Endothelial cell of umbilical vein (primary cell): ENCODE measurements at regions of chr7 and their contacts with region 1.

Region 1: DNA sequence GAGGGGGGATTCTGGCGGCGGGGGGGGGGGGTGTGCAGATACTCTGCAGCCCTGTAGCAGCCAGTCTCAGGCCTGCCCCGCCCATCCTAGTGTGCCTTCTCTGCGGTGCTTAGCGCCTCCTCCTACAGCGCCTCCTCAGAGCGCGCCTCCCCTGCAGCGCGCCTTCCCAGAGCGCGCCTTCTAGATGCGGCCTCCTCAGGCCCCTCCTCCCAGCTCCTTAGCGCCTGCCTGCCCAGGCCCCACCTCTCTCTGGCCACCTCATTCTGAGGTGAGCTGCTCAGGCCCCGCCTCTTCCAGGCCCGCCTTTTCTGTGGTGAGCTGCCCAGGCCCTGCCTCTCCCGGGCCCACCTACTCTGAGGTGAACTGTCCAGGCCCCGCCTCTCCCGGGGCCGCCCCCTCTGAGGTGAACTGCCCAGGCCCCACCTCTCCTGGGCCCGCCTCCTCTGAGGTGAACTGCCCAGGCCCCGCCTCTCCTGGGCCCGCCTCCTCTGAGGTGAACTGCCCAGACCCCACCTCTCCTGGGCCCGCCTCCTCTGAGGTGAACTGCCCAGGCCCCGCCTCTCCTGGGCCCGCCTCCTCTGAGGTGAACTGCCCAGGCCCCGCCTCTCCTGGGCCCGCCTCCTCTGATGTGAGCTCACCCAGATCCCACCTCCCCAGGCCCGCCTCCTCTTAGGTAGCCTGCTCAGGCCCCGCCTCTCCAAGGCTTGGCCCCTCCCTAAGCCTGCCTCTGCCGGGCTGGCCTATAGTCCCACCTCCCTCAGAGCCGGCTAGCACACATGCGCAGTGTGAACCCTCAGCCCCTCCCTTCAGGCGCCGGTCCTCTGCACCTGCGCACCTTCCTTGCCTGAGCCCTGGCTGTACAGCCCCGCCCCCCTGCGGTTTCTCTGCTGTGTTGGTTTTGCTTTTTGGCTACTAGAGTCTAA is 2.1 kb upstream of the SGCE start:
- DNase-seq: peak; percentile 95
- H3K4me3 ChIP-seq: peak overlapping the region in 2 of 3 experiments; percentile 38 to 41
- H3K27ac ChIP-seq: peak overlapping the region; percentile 47
- H3K4me1 ChIP-seq: peaks cover 20% of the 10 kb centered on the region
- H3K27me3 ChIP-seq: no peaks in the 10 kb centered on the region
- CTCF ChIP-seq: no peak
- POLR2A ChIP-seq: no peak

Region 2: GRCh38 chr7:94509879-94510581 is 148.0 kb before region 1 on chr7:
- CTCF ChIA-PET with region 1: interaction called, 4 read pairs
- POLR2A ChIA-PET with region 1: no interaction called
- dilution Hi-C with region 1: no loop called
- intact Hi-C with region 1: loop called (anchors 1 kb)
- DNase-seq: peak; percentile 69
- H3K4me3 ChIP-seq: peak overlapping the region; percentile 59 to 80 (median 60)
- H3K27ac ChIP-seq: peak overlapping the region; percentile 65
- H3K4me1 ChIP-seq: peaks cover 20% of the 10 kb centered on the region
- H3K27me3 ChIP-seq: no peaks in the 10 kb centered on the region
- CTCF ChIP-seq: peak in 1 of 2 donors; percentile 47
- POLR2A ChIP-seq: peak; percentile 55

Region 3: DNA sequence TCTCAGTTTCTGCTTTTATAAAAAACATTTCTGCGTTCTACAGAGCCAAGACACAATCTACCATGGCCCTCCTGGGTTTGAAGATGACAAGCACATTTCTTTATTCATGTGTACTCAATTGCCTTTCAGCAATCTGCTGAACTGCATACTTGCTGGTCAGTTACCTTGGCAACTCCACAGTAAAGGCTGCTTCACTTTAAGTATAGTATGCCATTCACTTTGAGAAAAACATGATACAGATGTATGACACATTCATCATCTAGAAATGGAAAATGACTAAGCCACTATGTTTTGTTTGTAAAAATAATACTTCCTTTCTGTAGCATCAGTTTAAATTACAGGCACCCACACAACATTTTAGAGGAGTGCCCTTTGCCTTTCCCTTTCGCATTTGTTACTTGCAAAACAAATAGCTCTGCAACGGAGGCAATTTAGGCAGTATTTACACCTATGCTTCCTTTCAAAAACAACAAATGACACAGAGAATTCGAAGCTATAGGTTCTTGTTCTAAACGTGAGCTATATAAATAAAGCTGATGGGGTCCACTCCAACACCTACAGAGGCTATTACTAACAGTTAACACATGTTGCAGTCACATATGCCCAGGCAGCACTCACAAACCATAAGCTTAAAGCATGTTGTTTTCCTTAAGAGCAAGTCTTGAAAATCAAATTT is 25.6 kb before region 1 on chr7:
- CTCF ChIA-PET with region 1: interaction called, 8 read pairs
- POLR2A ChIA-PET with region 1: no interaction called
- dilution Hi-C with region 1: no loop called
- intact Hi-C with region 1: loop called (anchors 1 kb)
- DNase-seq: peak; percentile 84
- H3K4me3 ChIP-seq: no peak overlapping the region
- H3K27ac ChIP-seq: peak overlapping the region; percentile 51
- H3K4me1 ChIP-seq: peaks cover 11% of the 10 kb centered on the region
- H3K27me3 ChIP-seq: no peaks in the 10 kb centered on the region
- CTCF ChIP-seq: no peak
- POLR2A ChIP-seq: no peak

Region 4: DNA sequence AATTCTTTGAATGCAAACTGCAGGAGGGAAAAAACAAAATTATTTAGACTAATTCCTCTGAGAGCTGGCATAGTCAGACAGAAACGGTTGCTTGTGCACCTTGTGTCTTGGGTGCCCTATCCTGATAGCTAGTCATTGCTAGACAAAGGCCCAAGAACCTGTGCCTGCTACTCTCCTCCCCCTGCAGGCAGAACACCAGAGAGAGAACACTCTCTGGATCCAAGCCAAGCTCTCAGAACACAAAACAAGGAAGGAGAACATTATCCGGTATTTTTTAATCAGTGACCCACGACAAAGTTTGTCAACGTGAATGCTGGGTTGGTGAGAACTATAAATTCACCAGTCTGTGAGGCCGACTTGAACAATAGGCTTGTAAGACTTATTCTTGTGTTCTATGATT is 230.5 kb after region 1 on chr7:
- CTCF ChIA-PET with region 1: interaction called, 7 read pairs
- POLR2A ChIA-PET with region 1: no interaction called
- dilution Hi-C with region 1: no loop called
- intact Hi-C with region 1: loop called (anchors 5 kb)
- DNase-seq: peak; percentile 85
- H3K4me3 ChIP-seq: no peak overlapping the region
- H3K27ac ChIP-seq: no peak overlapping the region
- H3K4me1 ChIP-seq: peaks cover 3% of the 10 kb centered on the region
- H3K27me3 ChIP-seq: no peaks in the 10 kb centered on the region
- CTCF ChIP-seq: peak; percentile 10 to 44
- POLR2A ChIP-seq: no peak

Region 5: GRCh38 chr7:95045236-95045923 is 387.3 kb after region 1 on chr7:
- CTCF ChIA-PET with region 1: no interaction called
- POLR2A ChIA-PET with region 1: no interaction called
- dilution Hi-C with region 1: no loop called
- intact Hi-C with region 1: loop called (anchors 1 kb)
- DNase-seq: peak; percentile 45
- H3K4me3 ChIP-seq: no peak overlapping the region
- H3K27ac ChIP-seq: no peak overlapping the region
- H3K4me1 ChIP-seq: no peaks in the 10 kb centered on the region
- H3K27me3 ChIP-seq: no peaks in the 10 kb centered on the region
- CTCF ChIP-seq: peak; percentile 10 to 27
- POLR2A ChIP-seq: no peak